SK-N-SH (cell line): ENCODE measurements at regions of chr13 and their contacts with region 1.

Region 1: GRCh38 chr13:95536632-95537241 is 15.8 kb upstream of the CLDN10 start:
- DNase-seq: no peak
- H3K4me3 ChIP-seq: no peak overlapping the region
- H3K27ac ChIP-seq: no peak overlapping the region
- H3K4me1 ChIP-seq: peaks cover 0 to 4% of the 10 kb centered on the region in 2 experiments; a peak in 2 of 4 replicates
- H3K27me3 ChIP-seq: no peaks in the 10 kb centered on the region
- CTCF ChIP-seq: peak; percentile 72
- EP300 ChIP-seq: no peak
- RAD21 ChIP-seq: peak; percentile 64

Region 2: DNA sequence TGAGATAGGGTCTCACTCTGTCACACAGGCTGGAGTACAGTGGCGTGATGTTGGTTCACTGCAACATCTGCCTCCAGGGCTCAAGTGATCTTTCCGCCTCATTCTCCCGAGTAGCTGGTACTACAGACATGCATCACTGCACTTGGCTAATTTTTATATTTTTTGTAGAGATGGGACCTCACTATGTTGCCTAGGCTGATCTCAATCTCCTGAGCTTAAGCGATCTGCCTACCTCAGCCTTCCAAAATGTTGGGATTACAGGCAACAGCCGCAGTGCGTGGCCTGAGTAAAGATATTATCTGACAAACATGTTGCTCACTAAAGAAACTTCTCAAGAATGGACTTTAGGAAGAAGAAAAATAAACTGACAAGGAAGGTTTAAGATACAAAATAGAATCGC is 110.1 kb before region 1 on chr13:
- CTCF ChIA-PET with region 1: no interaction called
- POLR2A ChIA-PET with region 1: no interaction called
- DNase-seq: no peak
- H3K4me3 ChIP-seq: no peak overlapping the region
- H3K27ac ChIP-seq: no peak overlapping the region
- H3K4me1 ChIP-seq: no peaks in the 10 kb centered on the region
- H3K27me3 ChIP-seq: no peaks in the 10 kb centered on the region; the same call in 1 of the 2 replicates
- CTCF ChIP-seq: no peak
- EP300 ChIP-seq: no peak
- RAD21 ChIP-seq: no peak

Region 3: DNA sequence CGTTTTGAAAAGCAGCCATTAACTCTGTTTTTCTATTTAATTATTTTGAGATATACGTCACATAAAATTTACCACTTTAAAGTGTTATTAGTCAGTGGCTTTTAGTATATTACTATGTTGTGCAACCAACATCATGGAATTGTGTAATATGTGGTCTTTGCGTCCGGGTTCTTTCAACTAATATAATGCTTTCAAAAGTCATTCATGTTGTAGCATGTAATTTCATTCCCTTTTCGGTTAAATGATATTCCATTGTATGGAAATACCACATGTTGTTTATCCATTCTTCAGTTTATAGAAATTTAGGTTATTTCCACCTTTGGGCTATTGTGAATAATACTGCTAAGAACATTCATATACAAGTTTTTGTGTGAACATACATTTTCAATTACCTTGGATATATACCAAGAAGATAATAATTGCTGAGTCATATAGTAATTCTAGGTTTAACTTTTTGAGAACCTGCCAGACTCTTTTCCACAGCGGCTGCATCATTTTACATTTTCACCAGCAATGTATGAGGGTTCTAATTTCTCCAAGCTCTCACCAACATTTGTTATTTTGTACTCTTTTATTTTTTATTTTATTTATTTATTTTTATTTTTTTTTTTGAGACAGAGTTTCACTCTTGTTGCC is 12.4 kb before region 1 on chr13:
- CTCF ChIA-PET with region 1: interaction called, 27 read pairs
- POLR2A ChIA-PET with region 1: no interaction called
- DNase-seq: no peak
- H3K4me3 ChIP-seq: no peak overlapping the region
- H3K27ac ChIP-seq: no peak overlapping the region
- H3K4me1 ChIP-seq: no peaks in the 10 kb centered on the region
- H3K27me3 ChIP-seq: no peaks in the 10 kb centered on the region
- CTCF ChIP-seq: no peak
- EP300 ChIP-seq: no peak
- RAD21 ChIP-seq: no peak

Region 4: DNA sequence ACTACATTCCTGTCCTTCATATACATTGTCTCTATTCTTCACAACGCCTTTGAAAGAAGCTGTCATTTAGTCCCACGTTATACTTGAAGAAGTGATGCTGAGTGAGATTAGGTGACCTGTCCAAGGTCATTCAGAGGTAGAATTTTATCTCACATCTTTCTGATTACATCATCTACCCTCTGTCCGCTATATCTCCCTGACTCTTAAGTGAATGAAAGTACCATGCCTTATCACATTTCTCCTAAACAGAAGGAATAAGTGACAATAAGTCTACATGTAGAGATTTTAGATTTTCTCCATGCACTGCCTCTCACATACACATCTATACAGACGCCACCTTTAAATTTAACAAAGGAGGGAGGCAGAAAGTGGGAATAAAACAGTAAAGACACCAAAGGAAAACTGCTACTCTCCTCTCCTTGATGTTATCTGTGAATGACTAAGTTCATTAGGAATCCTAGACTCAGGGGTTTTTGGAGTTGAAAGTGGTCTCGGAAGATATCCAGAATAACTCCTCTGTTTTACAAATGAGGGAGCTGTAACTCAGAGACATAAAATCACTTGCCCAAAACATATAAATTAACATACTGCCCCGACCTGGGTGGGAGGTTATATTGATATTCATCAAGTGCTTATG is 10.9 kb after region 1 on chr13:
- CTCF ChIA-PET with region 1: interaction called, 29 read pairs
- POLR2A ChIA-PET with region 1: no interaction called
- DNase-seq: no peak
- H3K4me3 ChIP-seq: no peak overlapping the region
- H3K27ac ChIP-seq: no peak overlapping the region
- H3K4me1 ChIP-seq: no peaks in the 10 kb centered on the region; a peak in 2 of 4 replicates
- H3K27me3 ChIP-seq: no peaks in the 10 kb centered on the region
- CTCF ChIP-seq: no peak
- EP300 ChIP-seq: no peak
- RAD21 ChIP-seq: no peak

Region 5: DNA sequence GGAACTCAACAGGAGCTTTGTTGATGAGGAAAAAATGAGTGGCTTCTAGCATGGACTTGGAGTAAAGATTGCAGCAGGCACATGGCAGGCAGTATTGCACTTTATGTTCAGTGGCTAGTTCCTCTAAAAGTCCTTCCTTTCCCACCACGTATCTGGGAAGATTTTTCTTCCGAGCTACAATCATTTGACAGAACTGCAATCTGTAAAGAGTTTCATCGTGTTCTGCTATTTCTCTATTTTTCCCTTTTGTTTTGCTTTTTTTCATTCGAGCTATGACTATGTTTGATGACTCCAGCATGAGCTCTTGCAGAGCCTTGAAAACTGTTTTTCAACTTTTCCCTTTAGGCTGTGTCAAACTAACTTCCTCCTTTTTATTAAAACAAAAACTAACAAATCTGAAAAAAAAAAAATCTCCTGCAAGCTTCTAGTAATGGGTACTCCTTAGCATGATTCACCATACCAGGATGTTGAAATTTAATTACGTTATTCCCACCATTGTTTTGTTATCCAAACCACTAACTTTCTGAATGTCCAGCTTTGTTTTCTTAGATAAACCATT is 28.1 kb after region 1 on chr13:
- CTCF ChIA-PET with region 1: interaction called, 14 read pairs
- POLR2A ChIA-PET with region 1: no interaction called
- DNase-seq: no peak
- H3K4me3 ChIP-seq: no peak overlapping the region
- H3K27ac ChIP-seq: no peak overlapping the region
- H3K4me1 ChIP-seq: no peaks in the 10 kb centered on the region
- H3K27me3 ChIP-seq: no peaks in the 10 kb centered on the region
- CTCF ChIP-seq: no peak
- EP300 ChIP-seq: no peak
- RAD21 ChIP-seq: no peak

Region 6: GRCh38 chr13:95603887-95604533 is 67.3 kb after region 1 on chr13:
- CTCF ChIA-PET with region 1: interaction called, 13 read pairs
- POLR2A ChIA-PET with region 1: no interaction called
- DNase-seq: no peak
- H3K4me3 ChIP-seq: no peak overlapping the region
- H3K27ac ChIP-seq: no peak overlapping the region
- H3K4me1 ChIP-seq: peaks cover 5 to 6% of the 10 kb centered on the region in 2 experiments; a peak in 2 of 4 replicates
- H3K27me3 ChIP-seq: no peaks in the 10 kb centered on the region
- CTCF ChIP-seq: no peak
- EP300 ChIP-seq: no peak
- RAD21 ChIP-seq: no peak

Region 7: DNA sequence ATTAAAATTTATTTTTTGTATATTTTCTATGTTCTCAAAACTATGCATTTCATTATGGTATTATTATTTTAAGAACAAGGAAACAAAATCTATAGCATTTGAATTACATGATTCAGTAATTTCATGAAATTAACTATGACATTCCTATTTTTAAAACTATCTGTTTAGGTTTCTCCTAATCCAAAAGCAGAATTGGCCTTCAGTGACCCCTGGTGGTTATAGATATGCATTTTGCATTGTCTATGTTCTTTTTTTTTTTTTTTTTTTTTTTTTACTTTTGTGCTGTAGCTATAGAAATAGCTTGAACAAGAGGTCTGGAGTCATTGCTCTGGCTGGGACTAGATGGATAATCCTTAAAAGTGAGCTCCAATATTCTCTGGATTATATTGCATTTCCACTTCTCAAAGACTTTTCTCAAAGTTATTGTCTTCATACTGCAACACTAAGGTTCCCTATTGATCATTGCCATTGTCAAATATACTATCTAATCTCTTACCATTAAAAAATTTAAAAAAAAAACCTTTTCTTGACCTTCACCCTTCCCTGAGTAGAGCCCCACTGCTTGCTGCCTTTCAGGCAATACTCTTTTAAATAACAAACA is 124.3 kb after region 1 on chr13:
- CTCF ChIA-PET with region 1: interaction called, 14 read pairs
- POLR2A ChIA-PET with region 1: no interaction called
- DNase-seq: peak; percentile 39
- H3K4me3 ChIP-seq: no peak overlapping the region
- H3K27ac ChIP-seq: no peak overlapping the region
- H3K4me1 ChIP-seq: no peaks in the 10 kb centered on the region
- H3K27me3 ChIP-seq: no peaks in the 10 kb centered on the region
- CTCF ChIP-seq: peak; percentile 80
- EP300 ChIP-seq: no peak
- RAD21 ChIP-seq: peak; percentile 82

Region 8: DNA sequence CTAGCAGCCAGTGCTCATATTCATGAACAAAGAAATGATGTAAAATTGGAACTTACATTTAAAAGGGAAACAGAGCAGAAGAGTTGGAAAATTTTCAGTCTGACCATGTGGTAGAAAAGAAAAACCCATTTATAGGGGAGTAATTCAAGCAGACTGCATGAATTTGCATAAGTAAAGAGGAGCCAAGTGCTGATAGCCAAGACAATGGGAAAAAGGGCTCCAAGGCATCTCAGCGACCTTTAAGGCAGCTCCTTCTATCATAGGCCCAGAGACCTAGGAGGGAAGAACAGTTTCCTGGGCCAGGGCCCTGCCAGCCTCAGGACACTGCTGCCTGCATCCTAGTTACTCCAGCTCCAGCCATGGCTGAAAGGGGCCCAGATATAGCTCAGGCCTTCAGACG is 147.7 kb after region 1 on chr13:
- CTCF ChIA-PET with region 1: no interaction called
- POLR2A ChIA-PET with region 1: no interaction called
- DNase-seq: no peak
- H3K4me3 ChIP-seq: no peak overlapping the region
- H3K27ac ChIP-seq: no peak overlapping the region
- H3K4me1 ChIP-seq: peaks cover 0 to 4% of the 10 kb centered on the region in 2 experiments; a peak in 2 of 4 replicates
- H3K27me3 ChIP-seq: no peaks in the 10 kb centered on the region
- CTCF ChIP-seq: no peak
- EP300 ChIP-seq: no peak
- RAD21 ChIP-seq: no peak